CD4-positive, alpha-beta memory T cell (primary cell): ENCODE measurements at regions of chr15 and their contacts with region 1.

Region 1: DNA sequence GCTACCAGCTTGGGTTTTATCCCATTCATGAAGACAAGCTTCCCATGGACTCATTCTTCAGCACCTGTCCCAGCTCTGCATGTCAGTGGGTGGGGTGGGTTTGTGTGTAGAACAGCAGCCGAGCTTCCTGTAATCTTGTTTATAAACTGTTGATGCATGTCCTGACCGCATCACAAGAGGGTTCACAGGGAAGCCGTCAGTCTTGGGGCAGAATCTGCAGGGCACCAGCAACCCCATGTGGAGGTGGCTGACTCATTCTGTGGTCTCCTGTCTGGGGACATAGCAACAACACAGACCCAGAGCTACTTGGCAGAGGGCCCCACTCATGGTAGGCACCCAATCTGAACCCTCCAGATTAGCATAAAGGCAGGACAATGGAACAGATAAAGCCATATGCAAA is 35.6 kb downstream of the DAPK2 start:
- DNase-seq: peak; percentile 89 to 98 (median 93)
- H3K4me3 ChIP-seq: no peak overlapping the region
- H3K4me3 Mint-ChIP-seq: peak overlapping the region in 7 of 8 donors; percentile 74 to 89 (median 79)
- H3K27ac ChIP-seq: peak overlapping the region; percentile 64
- H3K27ac Mint-ChIP-seq: peak overlapping the region; percentile 91 to 100 (median 99)
- H3K4me1 ChIP-seq: peaks cover 47% of the 10 kb centered on the region
- H3K4me1 Mint-ChIP-seq: peaks cover 32 to 49% (median 40%) of the 10 kb centered on the region in 4 donors
- H3K27me3 ChIP-seq: no peaks in the 10 kb centered on the region
- H3K27me3 Mint-ChIP-seq: no peaks in the 10 kb centered on the region

Region 2: DNA sequence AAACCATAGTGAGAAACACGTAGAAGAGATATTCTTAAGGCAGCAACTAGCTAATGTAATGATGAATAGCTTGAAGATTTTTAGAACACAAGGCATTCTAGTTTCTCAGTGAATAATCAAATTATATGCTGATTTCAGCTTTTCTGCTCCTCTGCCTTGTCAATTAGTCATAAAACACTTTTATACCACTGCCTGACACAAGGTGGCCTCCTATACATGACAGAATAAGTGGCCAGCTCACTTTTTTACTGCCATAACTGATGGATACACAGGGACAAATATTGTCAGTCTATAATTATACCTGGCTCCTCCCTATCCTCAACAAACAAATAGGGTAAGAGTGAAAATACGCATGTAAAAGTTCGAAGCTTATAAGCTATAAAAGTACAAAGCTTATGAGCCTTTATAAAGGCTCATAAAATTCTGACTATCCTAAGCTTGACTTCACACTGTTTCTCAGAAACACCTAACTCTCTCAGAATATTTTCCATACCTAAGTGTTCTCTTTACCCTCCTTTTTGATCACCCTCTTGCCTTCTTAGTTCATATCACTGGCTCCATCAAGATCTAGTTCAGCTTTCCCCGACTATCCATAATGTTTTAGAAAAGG is 258.5 kb before region 1 on chr15:
- CTCF ChIA-PET with region 1: interaction called, 97 read pairs
- POLR2A ChIA-PET with region 1: interaction called, 29 read pairs
- intact Hi-C with region 1: loop called (anchors 1 kb)
- DNase-seq: peak; percentile 44 to 66 (median 56)
- H3K4me3 ChIP-seq: no peak overlapping the region
- H3K4me3 Mint-ChIP-seq: no peak overlapping the region
- H3K27ac ChIP-seq: no peak overlapping the region
- H3K27ac Mint-ChIP-seq: peak overlapping the region in 4 of 7 donors; percentile 4 to 80 (median 56)
- H3K4me1 ChIP-seq: no peaks in the 10 kb centered on the region
- H3K4me1 Mint-ChIP-seq: peaks cover 0 to 3% (median 0%) of the 10 kb centered on the region in 4 donors
- H3K27me3 ChIP-seq: no peaks in the 10 kb centered on the region
- H3K27me3 Mint-ChIP-seq: no peaks in the 10 kb centered on the region

Region 3: DNA sequence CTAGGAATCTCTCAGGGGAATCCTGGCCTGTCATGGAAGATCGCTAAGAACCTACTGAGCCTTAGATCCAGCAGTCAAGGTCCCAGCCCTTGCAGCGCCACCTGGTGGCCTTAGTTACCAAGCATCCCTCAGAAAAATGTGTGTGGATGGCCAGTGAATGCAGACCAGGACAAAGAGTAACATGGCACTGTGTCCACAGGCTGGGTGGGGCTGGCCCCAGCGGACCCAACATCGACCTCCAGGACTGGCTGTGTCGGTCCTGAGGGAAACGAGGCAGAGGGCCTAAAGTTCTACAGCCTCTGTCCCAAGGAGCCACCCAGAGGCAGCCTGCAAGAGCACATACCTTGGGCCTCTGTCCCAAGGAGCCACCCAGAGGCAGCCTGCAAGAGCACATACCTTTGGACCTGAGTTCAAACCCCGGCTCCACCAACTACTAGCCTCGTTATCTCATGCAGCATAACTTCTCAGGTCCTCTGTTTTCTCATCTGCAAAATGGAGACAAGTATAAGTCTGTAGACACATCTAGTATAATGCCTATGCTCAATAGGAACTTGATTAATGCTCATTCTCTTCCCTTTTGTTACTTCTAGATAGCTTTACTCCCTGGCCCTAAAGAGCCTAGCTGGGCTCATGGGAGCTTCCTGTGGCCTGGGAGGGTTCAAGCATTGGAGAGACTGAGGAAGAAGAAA is 119.5 kb before region 1 on chr15:
- CTCF ChIA-PET with region 1: interaction called, 52 read pairs
- POLR2A ChIA-PET with region 1: interaction called, 34 read pairs
- intact Hi-C with region 1: loop called (anchors 1 kb)
- DNase-seq: peak; percentile 63 to 76 (median 69)
- H3K4me3 ChIP-seq: no peak overlapping the region
- H3K4me3 Mint-ChIP-seq: peak overlapping the region in 5 of 8 donors; percentile 4 to 79 (median 42)
- H3K27ac ChIP-seq: peak overlapping the region; percentile 53
- H3K27ac Mint-ChIP-seq: peak overlapping the region; percentile 71 to 94 (median 87)
- H3K4me1 ChIP-seq: peaks cover 58% of the 10 kb centered on the region
- H3K4me1 Mint-ChIP-seq: peaks cover 40 to 56% (median 49%) of the 10 kb centered on the region in 4 donors
- H3K27me3 ChIP-seq: no peaks in the 10 kb centered on the region
- H3K27me3 Mint-ChIP-seq: no peaks in the 10 kb centered on the region

Region 4: DNA sequence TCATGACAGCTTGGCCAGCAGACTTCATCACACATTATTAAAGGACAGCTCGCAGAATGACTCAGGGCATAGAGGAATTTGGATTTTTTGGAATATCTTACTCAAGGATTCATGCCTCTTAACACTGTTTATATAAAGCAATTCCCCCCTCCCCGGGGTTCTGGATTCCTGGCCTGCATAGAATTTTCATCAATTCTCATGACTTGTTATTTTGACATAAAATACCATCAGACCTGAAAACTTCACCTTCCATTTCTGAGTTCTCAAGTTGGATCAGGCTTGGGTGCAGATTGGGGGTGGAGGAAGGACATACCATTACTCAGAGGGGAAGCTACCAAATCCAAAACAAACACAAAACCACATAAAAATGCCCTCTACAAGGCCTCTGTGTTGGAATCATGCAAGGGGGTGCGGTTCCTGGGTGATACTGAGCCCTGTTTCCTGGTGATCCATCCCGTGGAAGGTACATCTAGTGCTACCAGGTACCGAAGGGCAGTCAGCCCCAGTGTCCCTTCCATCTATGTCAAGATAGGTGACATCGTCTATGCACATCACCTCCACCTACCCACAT is 59.7 kb before region 1 on chr15:
- CTCF ChIA-PET with region 1: interaction called, 154 read pairs
- POLR2A ChIA-PET with region 1: interaction called, 28 read pairs
- intact Hi-C with region 1: no loop called
- DNase-seq: no peak
- H3K4me3 ChIP-seq: no peak overlapping the region
- H3K4me3 Mint-ChIP-seq: no peak overlapping the region
- H3K27ac ChIP-seq: no peak overlapping the region
- H3K27ac Mint-ChIP-seq: peak overlapping the region in 2 of 7 donors; percentile 24 to 54
- H3K4me1 ChIP-seq: no peaks in the 10 kb centered on the region
- H3K4me1 Mint-ChIP-seq: peaks cover 0 to 2% (median 0%) of the 10 kb centered on the region in 4 donors
- H3K27me3 ChIP-seq: no peaks in the 10 kb centered on the region
- H3K27me3 Mint-ChIP-seq: no peaks in the 10 kb centered on the region

Region 5: GRCh38 chr15:64046347-64047153 is 35.8 kb after region 1 on chr15 and contains the start of gene DAPK2:
- CTCF ChIA-PET with region 1: interaction called, 47 read pairs
- POLR2A ChIA-PET with region 1: interaction called, 17 read pairs
- intact Hi-C with region 1: no loop called
- DNase-seq: peak; percentile 60 to 76 (median 64)
- H3K4me3 ChIP-seq: peak within 1 kb of the TSS; percentile 43 to 51
- H3K4me3 Mint-ChIP-seq: peak within 1 kb of the TSS; percentile 75 to 91 (median 78)
- H3K27ac ChIP-seq: no peak within 1 kb of the TSS
- H3K27ac Mint-ChIP-seq: peak within 1 kb of the TSS in 6 of 7 donors; percentile 13 to 87 (median 72)
- H3K4me1 ChIP-seq: peaks cover 12% of the 10 kb centered on the region
- H3K4me1 Mint-ChIP-seq: peaks cover 4 to 10% (median 5%) of the 10 kb centered on the region in 4 donors
- H3K27me3 ChIP-seq: no peaks in the 10 kb centered on the region
- H3K27me3 Mint-ChIP-seq: peaks cover 6 to 8% of the 10 kb centered on the region in 2 donors
- total RNA-seq, gene DAPK2: 2.3 to 2.9 TPM

Region 6: DNA sequence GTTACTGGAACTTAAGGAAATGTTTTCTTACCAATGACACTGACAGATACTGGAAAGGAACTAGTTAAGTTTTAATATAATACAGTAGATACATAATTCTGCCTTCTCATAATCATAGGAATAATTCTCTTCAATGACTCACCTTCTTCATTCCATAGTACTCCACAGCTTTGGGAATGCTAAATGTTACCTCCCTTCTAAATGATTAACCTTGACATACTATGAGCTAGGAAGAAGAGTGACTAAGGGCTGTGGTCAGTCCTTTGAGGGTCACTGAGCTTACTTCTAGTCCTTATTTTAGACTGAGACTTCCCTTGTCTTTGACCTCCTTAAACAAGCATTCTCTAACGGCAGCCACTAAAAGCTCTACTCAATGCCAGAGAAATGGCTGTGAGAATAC is 221.7 kb after region 1 on chr15:
- CTCF ChIA-PET with region 1: no interaction called
- POLR2A ChIA-PET with region 1: no interaction called
- intact Hi-C with region 1: no loop called
- DNase-seq: no peak
- H3K4me3 ChIP-seq: no peak overlapping the region
- H3K4me3 Mint-ChIP-seq: no peak overlapping the region
- H3K27ac ChIP-seq: no peak overlapping the region
- H3K27ac Mint-ChIP-seq: no peak overlapping the region
- H3K4me1 ChIP-seq: no peaks in the 10 kb centered on the region
- H3K4me1 Mint-ChIP-seq: peaks cover 4 to 17% (median 11%) of the 10 kb centered on the region in 4 donors
- H3K27me3 ChIP-seq: no peaks in the 10 kb centered on the region
- H3K27me3 Mint-ChIP-seq: no peaks in the 10 kb centered on the region

Region 7: DNA sequence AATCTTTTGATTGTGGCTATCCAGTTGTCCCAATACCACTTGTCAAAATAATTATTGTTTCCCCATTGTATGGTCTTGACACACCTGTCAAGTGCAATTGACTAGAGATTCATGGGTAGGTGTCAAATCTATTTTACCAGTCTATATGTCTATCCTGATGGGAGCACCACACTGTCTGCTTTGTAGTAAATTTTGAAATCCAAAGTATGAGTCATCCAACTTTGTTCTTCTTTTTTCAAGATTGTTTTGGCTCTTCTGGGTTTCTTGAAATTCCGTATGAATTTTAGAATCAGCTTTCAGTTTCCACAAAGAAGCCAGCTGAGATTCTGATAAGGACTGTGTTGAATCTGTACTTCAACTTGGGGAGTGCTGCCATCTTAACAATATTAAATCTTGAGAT is 273.3 kb after region 1 on chr15:
- CTCF ChIA-PET with region 1: no interaction called
- POLR2A ChIA-PET with region 1: no interaction called
- intact Hi-C with region 1: no loop called
- DNase-seq: no peak
- H3K4me3 ChIP-seq: no peak overlapping the region
- H3K4me3 Mint-ChIP-seq: no peak overlapping the region
- H3K27ac ChIP-seq: no peak overlapping the region
- H3K27ac Mint-ChIP-seq: no peak overlapping the region
- H3K4me1 ChIP-seq: no peaks in the 10 kb centered on the region
- H3K4me1 Mint-ChIP-seq: peaks cover 3 to 6% (median 4%) of the 10 kb centered on the region in 4 donors
- H3K27me3 ChIP-seq: no peaks in the 10 kb centered on the region
- H3K27me3 Mint-ChIP-seq: no peaks in the 10 kb centered on the region

Region 8: GRCh38 chr15:64355944-64356709 is 345.4 kb after region 1 on chr15 and contains the start of gene CSNK1G1:
- CTCF ChIA-PET with region 1: no interaction called
- POLR2A ChIA-PET with region 1: no interaction called
- intact Hi-C with region 1: no loop called
- DNase-seq: peak; percentile 89 to 94 (median 90)
- H3K4me3 ChIP-seq: peak within 1 kb of the TSS; percentile 76 to 95
- H3K4me3 Mint-ChIP-seq: peak within 1 kb of the TSS; percentile 89 to 99 (median 96)
- H3K27ac ChIP-seq: peak within 1 kb of the TSS; percentile 67
- H3K27ac Mint-ChIP-seq: peak within 1 kb of the TSS; percentile 92 to 97 (median 94)
- H3K4me1 ChIP-seq: peaks cover 21% of the 10 kb centered on the region
- H3K4me1 Mint-ChIP-seq: peaks cover 13 to 25% (median 19%) of the 10 kb centered on the region in 4 donors
- H3K27me3 ChIP-seq: no peaks in the 10 kb centered on the region
- H3K27me3 Mint-ChIP-seq: no peaks in the 10 kb centered on the region
- total RNA-seq, gene CSNK1G1: 27.3 to 27.7 TPM